HepG2 (cell line): ENCODE measurements at regions of chr16 and their contacts with region 1.

Region 1: DNA sequence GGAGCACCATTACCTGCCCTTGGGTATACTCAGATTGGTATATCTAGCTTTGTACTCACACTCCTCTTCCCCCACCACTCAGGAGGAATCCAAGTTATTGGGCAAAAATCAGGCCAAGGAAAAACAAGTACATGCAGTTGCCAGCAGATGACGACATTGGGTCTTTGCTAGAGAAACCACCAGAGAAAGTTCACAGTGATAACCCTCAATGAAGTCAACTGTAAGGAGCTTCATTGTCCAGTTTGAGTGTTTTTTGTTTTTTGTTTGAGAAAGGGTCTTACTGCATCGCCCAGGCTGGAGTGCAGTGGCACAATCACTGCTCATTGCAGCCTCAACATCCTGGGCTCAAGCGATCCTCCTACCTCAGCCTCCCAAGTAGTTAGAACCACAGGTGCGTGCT is 34.6 kb upstream of the TOX3 start:
- DNase-seq: peak; percentile 75
- ATAC-seq: peak; percentile 55
- H3K4me3 ChIP-seq: no peak overlapping the region
- H3K27ac ChIP-seq: no peak overlapping the region
- H3K4me1 ChIP-seq: peaks cover 59% of the 10 kb centered on the region
- H3K27me3 ChIP-seq: no peaks in the 10 kb centered on the region
- CTCF ChIP-seq: peak; percentile 72
- EP300 ChIP-seq: no peak
- POLR2A ChIP-seq: no peak
- RAD21 ChIP-seq: peak; percentile 90

Region 2: DNA sequence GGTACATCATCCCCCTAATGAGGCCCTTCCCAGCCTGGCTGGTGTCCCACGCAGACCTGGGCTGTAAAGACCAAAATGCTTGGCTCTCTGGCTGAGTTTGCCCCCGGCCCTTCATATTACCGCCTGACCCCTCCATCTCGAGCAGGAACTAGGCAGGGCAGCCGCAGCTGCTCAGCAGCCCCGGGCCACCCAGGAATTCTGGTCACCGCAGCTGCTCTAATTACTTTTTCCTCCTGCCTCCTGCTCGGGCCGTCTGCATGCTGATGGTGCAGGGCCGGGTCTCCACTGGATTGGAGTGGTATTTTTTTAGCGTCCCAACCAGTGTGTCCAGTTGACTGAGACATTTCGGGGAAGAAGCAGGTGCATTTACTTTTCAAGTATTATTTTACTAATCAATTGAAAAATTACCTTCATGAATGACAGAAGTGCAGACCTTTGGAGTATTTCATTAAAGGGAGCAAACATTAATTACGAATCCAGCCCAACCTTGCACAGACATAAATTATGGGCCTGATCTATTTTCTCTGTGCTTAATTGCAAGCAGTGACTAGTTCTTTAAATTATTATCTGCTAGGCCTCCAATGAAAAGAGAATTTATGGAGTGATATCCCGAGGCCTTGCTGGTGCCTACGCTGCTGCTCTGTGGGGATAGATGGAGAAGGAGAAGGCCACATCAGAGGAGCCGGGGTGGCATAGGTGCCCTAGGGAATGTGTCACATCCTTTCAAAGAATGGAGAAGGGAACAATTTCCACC is 1663.4 kb before region 1 on chr16:
- CTCF ChIA-PET with region 1: no interaction called
- POLR2A ChIA-PET with region 1: no interaction called
- in situ Hi-C with region 1: no loop called
- intact Hi-C with region 1: no loop called
- DNase-seq: no peak
- ATAC-seq: no peak
- H3K4me3 ChIP-seq: no peak overlapping the region
- H3K27ac ChIP-seq: no peak overlapping the region
- H3K4me1 ChIP-seq: no peaks in the 10 kb centered on the region
- H3K27me3 ChIP-seq: peaks cover 2 to 12% of the 10 kb centered on the region in 2 experiments; a peak in 2 of 5 replicates
- CTCF ChIP-seq: no peak
- EP300 ChIP-seq: no peak
- POLR2A ChIP-seq: no peak
- RAD21 ChIP-seq: no peak

Region 3: GRCh38 chr16:52191531-52192134 is 389.9 kb before region 1 on chr16:
- CTCF ChIA-PET with region 1: no interaction called
- POLR2A ChIA-PET with region 1: no interaction called
- in situ Hi-C with region 1: no loop called
- intact Hi-C with region 1: loop called (anchors 2 kb)
- DNase-seq: peak; percentile 76
- ATAC-seq: peak; percentile 74
- H3K4me3 ChIP-seq: no peak overlapping the region
- H3K27ac ChIP-seq: no peak overlapping the region
- H3K4me1 ChIP-seq: peaks cover 9% of the 10 kb centered on the region
- H3K27me3 ChIP-seq: no peaks in the 10 kb centered on the region
- CTCF ChIP-seq: peak; percentile 97
- EP300 ChIP-seq: no peak
- POLR2A ChIP-seq: no peak
- RAD21 ChIP-seq: peak; percentile 90

Region 4: DNA sequence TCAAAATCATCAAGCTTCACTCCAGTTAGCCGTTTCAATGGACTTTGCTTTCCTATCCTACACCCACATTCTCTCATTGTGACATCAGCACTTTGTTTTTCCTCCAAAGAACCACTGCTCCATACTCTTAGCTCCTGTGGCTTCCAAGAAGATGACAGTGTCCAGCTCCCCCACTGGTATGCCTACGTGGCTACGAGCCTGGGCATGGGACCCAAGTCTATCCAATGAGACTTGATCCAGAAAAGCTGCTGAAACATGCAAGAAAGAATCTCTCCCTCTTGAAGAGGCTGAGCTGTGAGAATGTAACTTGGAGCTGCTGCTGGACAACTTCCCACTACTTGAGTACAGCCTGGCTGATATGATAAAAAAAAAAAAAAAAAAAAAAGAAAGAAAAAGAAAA is 44.0 kb before region 1 on chr16:
- CTCF ChIA-PET with region 1: no interaction called
- POLR2A ChIA-PET with region 1: interaction called, 14 read pairs
- in situ Hi-C with region 1: no loop called
- intact Hi-C with region 1: no loop called
- DNase-seq: no peak
- ATAC-seq: no peak
- H3K4me3 ChIP-seq: no peak overlapping the region
- H3K27ac ChIP-seq: no peak overlapping the region
- H3K4me1 ChIP-seq: peaks cover 80% of the 10 kb centered on the region
- H3K27me3 ChIP-seq: no peaks in the 10 kb centered on the region
- CTCF ChIP-seq: no peak
- EP300 ChIP-seq: no peak
- POLR2A ChIP-seq: no peak
- RAD21 ChIP-seq: no peak

Region 5: DNA sequence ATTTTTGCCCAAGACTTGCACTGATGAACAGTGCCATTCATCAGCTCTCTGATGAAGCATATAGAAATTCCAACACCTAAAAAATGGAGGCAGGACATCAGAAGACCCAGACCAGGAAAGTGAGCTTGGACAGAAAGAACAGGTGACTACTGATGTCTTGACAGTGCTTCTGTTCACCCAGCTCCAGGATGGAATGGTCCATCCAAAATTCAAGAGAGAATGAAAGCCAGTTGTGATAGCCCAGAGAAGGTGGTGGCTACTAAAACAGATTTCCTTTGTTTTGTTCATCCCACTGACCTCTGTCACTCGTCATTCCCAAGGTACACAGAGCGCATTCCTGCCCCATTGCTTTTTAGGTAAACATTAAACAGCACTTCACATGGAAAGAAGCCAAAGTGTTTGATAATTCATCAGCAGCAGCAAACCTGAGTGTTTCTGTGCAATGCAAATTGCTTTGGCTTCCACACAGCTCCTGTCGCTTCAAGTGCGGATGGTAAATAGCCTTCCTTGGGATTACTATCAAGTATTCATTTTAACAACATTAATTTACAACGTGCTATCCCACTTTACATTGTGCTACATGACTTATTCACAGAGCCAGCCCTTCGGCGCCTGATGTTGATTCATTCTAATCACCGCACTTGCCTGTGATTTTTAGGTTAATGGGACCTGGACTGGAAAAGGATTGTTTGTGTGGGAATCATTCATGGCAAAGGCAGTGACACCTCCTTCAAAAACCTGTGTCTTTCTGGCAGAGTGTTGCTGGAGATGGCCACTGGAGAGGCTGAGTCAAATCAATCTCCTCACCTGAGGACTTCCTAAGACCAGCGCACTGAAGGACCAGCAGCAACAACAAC is 30.5 kb after region 1 on chr16:
- CTCF ChIA-PET with region 1: no interaction called
- POLR2A ChIA-PET with region 1: interaction called, 38 read pairs
- in situ Hi-C with region 1: no loop called
- intact Hi-C with region 1: no loop called
- DNase-seq: peak; percentile 99
- ATAC-seq: peak; percentile 100
- H3K4me3 ChIP-seq: peak overlapping the region; percentile 57 to 73 (median 67)
- H3K27ac ChIP-seq: peak overlapping the region; percentile 89
- H3K4me1 ChIP-seq: peaks cover 41% of the 10 kb centered on the region
- H3K27me3 ChIP-seq: no peaks in the 10 kb centered on the region
- CTCF ChIP-seq: no peak
- EP300 ChIP-seq: peak; percentile 23 to 97; a peak in 2 of 4 replicates
- POLR2A ChIP-seq: peak; percentile 56 to 67
- RAD21 ChIP-seq: no peak

Region 6: DNA sequence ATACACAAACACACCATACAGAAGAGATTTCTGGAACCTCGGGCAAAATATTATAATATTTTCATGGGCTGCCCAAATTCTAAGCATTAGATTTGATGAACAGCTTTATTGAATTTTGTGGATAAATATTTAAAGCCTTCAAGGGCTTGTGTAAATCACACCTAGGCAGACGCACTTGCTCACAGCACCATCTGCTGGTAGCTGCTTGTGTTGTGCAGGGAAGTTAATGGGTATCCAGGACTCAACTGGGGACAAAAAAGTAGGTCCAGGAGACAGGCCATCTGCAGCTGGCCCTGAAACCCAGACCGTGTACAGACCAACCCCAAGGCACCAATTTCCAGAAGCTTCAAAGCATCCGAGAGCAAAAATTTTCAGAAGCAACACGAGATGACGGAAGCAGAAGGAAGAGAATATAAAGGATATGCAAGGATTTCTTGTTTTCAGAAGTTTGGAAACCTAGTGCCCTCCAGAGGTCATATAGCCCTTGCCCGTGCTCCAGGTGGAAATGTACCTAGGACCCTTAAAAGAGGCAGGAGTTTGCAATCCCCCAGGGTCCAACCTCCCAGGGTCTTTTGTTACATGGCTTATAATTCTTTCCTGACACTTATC is 331.1 kb after region 1 on chr16:
- CTCF ChIA-PET with region 1: interaction called, 11 read pairs
- POLR2A ChIA-PET with region 1: no interaction called
- in situ Hi-C with region 1: no loop called
- intact Hi-C with region 1: loop called (anchors 1 kb)
- DNase-seq: peak; percentile 78
- ATAC-seq: peak; percentile 97
- H3K4me3 ChIP-seq: no peak overlapping the region
- H3K27ac ChIP-seq: no peak overlapping the region
- H3K4me1 ChIP-seq: no peaks in the 10 kb centered on the region
- H3K27me3 ChIP-seq: peaks cover 0 to 4% of the 10 kb centered on the region in 2 experiments; a peak in 2 of 5 replicates
- CTCF ChIP-seq: peak; percentile 90
- EP300 ChIP-seq: no peak
- POLR2A ChIP-seq: no peak
- RAD21 ChIP-seq: peak; percentile 91